Activated naive CD4-positive, alpha-beta T cell treated with anti-CD3 and anti-CD28 coated beads for 36 hours (primary cell): ENCODE measurements at regions of chr2 and their contacts with region 1.

Region 1: DNA sequence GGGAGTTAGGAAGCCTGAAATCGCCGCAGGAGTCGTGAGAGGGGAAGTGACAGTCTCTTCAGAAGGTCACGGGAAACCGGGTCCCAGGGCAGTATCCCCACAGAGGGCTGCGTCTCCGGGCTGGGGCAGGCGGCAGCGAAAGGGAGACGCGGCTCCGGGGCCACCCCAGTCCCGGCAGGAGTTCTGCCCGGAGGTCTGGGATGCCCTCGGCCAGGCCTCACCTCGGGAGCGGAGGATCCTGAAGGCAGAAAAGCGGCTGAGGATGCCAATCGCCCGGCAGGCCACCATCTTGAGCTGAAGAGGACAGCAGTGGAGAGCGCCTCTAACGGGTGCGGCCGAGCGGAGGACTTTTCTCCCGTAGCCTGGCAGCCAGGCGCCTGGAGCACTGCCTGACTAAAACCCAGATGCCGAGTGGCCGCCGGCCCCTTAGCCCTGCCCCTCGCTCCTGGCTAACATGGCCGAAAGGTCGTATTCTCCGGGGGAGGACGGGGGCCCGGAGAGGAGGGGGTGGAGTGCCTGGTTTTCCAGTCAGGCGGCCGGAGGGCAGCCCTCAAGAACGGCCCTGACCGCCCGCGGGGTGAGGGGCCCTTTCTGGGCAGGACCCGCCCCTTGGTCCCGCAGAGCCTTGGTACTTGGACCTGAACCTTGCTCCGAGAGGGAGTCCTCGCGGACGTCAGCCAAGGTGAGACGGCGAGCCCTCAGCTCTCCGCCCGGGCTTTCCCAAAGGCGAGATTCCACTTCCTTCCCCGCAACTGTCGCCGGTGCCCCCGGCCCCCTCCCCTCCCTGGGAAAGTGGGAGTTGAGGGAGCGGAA is at the starts of genes HADHA and HADHB:
- DNase-seq: peak; percentile 85
- H3K4me3 Mint-ChIP-seq: peak within 1 kb of the TSS; percentile 99
- H3K27ac Mint-ChIP-seq: peak within 1 kb of the TSS; percentile 97
- H3K4me1 Mint-ChIP-seq: peaks cover 46% of the 10 kb centered on the region
- H3K27me3 Mint-ChIP-seq: no peaks in the 10 kb centered on the region
- total RNA-seq, gene HADHA: 117 to 123 TPM
- total RNA-seq, gene HADHB: 65.1 to 67.6 TPM

Region 2: DNA sequence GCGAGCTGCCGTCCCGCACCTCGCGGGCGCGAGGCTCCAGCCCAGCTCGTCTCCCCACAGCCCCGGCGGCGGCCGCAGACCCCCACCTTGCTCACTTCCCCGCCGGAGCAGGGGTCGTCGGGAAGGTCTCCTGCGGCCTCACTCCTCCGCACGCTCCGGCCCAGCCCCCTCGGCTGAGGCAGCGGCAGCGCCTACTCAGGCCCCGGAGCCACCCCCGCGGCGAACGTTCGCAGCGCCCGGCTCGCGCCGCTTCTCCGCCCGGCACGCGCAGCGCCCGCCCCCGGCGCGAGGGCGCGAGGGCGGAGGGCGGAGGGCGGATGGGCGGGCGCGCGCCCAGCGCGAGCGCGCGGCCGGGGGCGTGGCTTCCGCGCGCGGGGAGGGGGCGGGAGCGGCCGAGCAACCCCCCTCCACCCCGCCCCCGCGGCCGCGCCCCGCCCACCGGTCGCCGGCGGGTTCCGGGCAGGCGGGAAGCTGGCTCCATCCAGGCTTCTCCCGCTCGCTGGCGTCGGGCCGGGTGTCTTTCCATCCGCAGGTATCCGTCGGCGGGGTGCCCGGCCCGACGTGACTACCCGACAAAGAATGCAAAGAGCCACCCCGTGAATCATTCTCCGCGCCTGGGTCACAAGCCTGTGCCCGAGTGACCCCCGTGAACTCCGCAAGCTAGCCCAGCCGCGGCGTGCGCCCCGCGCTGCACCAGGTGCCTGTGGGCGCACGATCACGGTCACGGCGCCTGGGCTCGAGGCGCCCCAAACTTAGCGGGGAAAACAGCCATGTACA is 571.0 kb before region 1 on chr2 and contains the start of gene DTNB:
- CTCF ChIA-PET with region 1: no interaction called
- intact Hi-C with region 1: loop called (anchors 5 kb)
- DNase-seq: peak; percentile 82
- H3K4me3 Mint-ChIP-seq: peak within 1 kb of the TSS; percentile 79
- H3K27ac Mint-ChIP-seq: peak within 1 kb of the TSS; percentile 60
- H3K4me1 Mint-ChIP-seq: peaks cover 25% of the 10 kb centered on the region
- H3K27me3 Mint-ChIP-seq: no peaks in the 10 kb centered on the region
- total RNA-seq, gene DTNB: 27.2 to 27.6 TPM

Region 3: DNA sequence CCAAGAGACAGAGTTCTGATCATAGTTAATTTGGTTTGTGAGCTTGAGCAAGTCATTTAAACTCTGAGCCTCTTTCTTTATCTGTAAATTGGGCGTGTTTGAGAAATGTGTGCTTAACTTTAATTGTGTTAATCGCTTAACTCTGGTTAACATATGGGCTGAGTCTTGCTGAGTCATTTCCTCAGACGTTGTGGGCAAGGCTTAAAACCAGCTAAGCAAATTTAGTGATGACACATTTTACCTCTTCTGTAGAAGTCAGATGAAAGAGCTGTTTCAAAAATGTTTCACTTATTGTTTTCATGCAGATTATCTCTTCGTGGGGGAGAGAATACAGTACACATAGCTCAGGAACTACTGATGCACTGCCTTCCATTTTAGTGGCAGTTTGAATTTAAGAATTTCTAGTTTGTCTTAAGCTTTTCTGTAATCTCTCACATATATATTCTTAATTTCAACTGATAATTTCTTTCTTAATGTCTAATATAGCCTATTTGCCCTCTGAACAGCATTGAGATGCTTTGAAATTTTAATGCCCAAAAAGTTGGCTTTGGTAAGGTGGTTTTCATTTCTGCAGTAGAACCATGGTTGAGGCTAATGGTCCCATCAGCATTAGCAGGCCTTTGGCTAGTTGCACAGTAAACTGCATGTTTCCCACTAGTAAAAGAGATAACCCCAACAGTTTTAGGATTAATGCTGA is 175.8 kb before region 1 on chr2:
- CTCF ChIA-PET with region 1: no interaction called
- intact Hi-C with region 1: loop called (anchors 10 kb)
- DNase-seq: peak; percentile 76
- H3K4me3 Mint-ChIP-seq: no peak overlapping the region
- H3K27ac Mint-ChIP-seq: peak overlapping the region; percentile 20
- H3K4me1 Mint-ChIP-seq: peaks cover 47% of the 10 kb centered on the region
- H3K27me3 Mint-ChIP-seq: no peaks in the 10 kb centered on the region

Region 4: DNA sequence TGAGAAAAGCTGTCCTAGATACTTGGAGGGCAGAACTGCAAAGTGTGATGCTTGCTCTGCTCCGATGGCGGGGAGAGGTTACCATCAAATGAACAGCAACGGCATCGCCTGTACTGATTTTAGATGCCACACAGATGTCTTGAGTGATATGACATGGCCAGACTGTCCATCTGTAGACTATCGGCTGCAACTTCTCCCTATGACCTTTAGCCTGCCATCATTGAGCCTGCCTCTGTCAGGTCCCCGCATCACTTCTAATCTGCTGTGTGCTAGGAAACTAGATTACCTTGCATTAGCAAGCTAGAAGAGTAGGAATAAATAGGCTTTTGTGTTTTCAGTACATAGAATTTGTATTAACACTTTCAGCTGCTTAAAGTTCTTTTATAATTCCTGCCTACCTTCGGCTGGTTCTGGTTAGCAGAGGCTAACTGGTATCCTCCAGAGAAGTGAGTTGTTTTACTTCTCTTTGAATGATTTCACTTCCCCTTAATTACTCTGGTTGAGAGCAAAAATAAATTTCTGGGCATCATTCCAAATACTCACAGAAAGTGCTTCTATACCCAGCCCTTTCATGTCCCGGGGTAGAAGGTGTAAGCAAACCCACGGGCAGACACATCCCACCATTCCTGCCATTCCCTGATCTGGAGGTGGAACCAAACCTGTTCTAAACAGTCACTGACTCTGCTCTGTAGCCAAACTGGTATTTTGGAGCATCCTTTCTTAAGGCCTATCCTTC is 47.7 kb before region 1 on chr2:
- CTCF ChIA-PET with region 1: no interaction called
- intact Hi-C with region 1: no loop called
- DNase-seq: no peak
- H3K4me3 Mint-ChIP-seq: no peak overlapping the region
- H3K27ac Mint-ChIP-seq: no peak overlapping the region
- H3K4me1 Mint-ChIP-seq: peaks cover 4% of the 10 kb centered on the region
- H3K27me3 Mint-ChIP-seq: no peaks in the 10 kb centered on the region

Region 5: DNA sequence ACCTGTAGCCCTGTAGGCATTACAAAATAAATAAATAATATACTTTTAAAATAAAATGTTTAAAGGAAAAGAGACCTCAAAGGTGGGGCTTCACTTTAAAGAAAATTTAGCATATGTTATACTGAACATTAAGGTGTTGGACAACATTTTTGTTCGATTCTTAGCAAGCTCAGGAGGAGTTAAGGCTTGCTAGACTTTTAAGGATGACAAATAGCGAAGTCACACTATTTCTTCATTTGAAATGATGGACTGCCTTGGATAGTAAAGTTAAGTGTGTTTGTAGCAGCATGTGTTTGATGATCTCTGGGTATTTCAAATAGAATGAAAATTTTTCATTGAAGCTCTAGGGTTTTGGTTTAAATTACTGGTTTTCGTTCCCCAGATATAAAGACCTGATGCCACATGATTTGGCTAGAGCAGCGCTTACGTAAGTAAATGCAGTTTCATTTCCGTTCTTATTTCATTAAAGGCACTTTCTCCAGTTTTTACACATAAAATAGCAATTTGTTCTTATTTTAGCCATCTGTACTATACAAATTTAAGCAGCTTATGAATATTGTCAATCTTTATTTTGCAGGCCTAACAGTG is 25.1 kb after region 1 on chr2:
- CTCF ChIA-PET with region 1: no interaction called
- intact Hi-C with region 1: loop called (anchors 1 kb)
- DNase-seq: no peak
- H3K4me3 Mint-ChIP-seq: no peak overlapping the region
- H3K27ac Mint-ChIP-seq: peak overlapping the region; percentile 79
- H3K4me1 Mint-ChIP-seq: peaks cover 16% of the 10 kb centered on the region
- H3K27me3 Mint-ChIP-seq: no peaks in the 10 kb centered on the region

Region 6: GRCh38 chr2:26330113-26330549 is 85.6 kb after region 1 on chr2:
- CTCF ChIA-PET with region 1: no interaction called
- intact Hi-C with region 1: loop called (anchors 1 kb)
- DNase-seq: peak; percentile 95
- H3K4me3 Mint-ChIP-seq: no peak overlapping the region
- H3K27ac Mint-ChIP-seq: no peak overlapping the region
- H3K4me1 Mint-ChIP-seq: peaks cover 7% of the 10 kb centered on the region
- H3K27me3 Mint-ChIP-seq: no peaks in the 10 kb centered on the region

Region 7: GRCh38 chr2:26422947-26423629 is 178.6 kb after region 1 on chr2:
- CTCF ChIA-PET with region 1: no interaction called
- intact Hi-C with region 1: no loop called
- DNase-seq: no peak
- H3K4me3 Mint-ChIP-seq: no peak overlapping the region
- H3K27ac Mint-ChIP-seq: no peak overlapping the region
- H3K4me1 Mint-ChIP-seq: no peaks in the 10 kb centered on the region
- H3K27me3 Mint-ChIP-seq: peaks cover 3% of the 10 kb centered on the region

Region 8: DNA sequence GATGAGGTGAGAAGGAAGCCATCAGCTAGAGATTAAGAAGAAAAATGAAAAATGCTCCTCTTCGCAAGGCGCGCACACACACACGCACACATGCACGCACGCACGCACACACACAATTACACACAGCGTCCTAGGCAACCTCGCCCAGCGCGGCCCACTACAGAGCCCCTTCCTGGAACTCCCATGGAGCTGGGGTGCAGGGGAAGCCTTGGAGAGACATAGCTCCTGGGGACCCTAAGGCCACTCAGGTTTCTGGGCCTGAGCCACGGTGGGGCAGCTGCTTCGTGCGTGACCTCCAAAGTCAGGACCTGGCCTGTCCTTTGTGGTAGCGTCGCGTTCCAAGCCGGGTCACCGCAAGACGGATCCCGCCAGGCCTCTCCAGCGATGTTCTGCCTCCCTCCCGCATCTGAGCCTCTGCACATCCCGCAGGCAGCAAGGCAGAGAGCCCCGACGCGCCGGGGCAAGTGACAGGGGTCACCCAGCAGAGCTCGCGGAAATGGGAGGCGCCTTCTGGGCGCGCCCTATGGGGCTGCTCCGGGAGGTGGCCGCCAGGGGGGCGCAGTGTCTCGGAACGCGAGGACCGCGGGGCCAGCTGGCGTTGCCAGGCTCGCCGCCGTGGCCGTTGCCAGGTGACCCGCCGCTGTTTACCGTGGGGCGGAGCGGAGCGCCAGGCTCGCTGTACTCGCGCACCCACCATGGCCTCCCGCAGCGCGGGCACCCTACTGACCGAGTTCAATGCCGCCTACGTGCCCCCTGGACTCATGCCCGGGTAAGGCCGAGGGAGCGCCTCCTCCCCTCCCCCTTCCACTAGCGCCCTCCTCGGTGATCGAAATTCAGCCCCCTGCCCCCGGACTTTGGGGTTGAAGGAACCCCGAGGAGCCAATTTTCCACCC is 317.6 kb after region 1 on chr2:
- CTCF ChIA-PET with region 1: no interaction called
- intact Hi-C with region 1: no loop called
- DNase-seq: peak; percentile 38
- H3K4me3 Mint-ChIP-seq: peak overlapping the region; percentile 43
- H3K27ac Mint-ChIP-seq: no peak overlapping the region
- H3K4me1 Mint-ChIP-seq: peaks cover 9% of the 10 kb centered on the region
- H3K27me3 Mint-ChIP-seq: peaks cover 54% of the 10 kb centered on the region